ENCODE measurements at regions of chr4 and their contacts with region 1.

Region 1: DNA sequence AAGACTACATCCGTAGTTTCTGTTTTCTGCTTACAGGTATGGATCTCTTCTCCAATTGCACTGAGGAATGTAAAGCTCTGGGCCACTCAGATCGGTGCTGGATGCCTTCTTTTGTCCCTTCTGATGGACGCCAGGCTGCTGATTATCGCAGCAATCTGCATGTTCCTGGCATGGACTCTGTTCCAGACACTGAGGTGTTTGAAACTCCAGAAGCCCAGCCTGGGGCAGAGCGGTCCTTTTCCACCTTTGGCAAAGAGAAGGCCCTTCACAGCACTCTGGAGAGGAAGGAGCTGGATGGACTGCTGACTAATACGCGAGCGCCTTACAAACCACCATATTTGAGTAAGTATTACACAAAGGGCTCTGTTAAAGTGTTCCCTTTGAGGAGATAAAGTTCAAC is 13.8 kb downstream of the PCDH10 start:
- DNase-seq: no peak
- ATAC-seq: no peak
- H3K4me3 Mint-ChIP-seq: no peak overlapping the region
- H3K27ac Mint-ChIP-seq: no peak overlapping the region
- H3K4me1 Mint-ChIP-seq: no peaks in the 10 kb centered on the region
- H3K27me3 Mint-ChIP-seq: no peaks in the 10 kb centered on the region

Region 2: GRCh38 chr4:133137571-133137970 is 25.4 kb before region 1 on chr4:
- CTCF ChIA-PET with region 1: no interaction called
- POLR2A ChIA-PET with region 1: no interaction called
- intact Hi-C with region 1: no loop called
- DNase-seq: no peak
- ATAC-seq: no peak
- H3K4me3 Mint-ChIP-seq: no peak overlapping the region
- H3K27ac Mint-ChIP-seq: no peak overlapping the region
- H3K4me1 Mint-ChIP-seq: no peaks in the 10 kb centered on the region
- H3K27me3 Mint-ChIP-seq: no peaks in the 10 kb centered on the region

Region 3: GRCh38 chr4:133178956-133179355 is 16.0 kb after region 1 on chr4:
- CTCF ChIA-PET with region 1: no interaction called
- POLR2A ChIA-PET with region 1: no interaction called
- intact Hi-C with region 1: no loop called
- DNase-seq: no peak
- ATAC-seq: no peak
- H3K4me3 Mint-ChIP-seq: no peak overlapping the region
- H3K27ac Mint-ChIP-seq: no peak overlapping the region
- H3K4me1 Mint-ChIP-seq: no peaks in the 10 kb centered on the region
- H3K27me3 Mint-ChIP-seq: no peaks in the 10 kb centered on the region

Region 4: DNA sequence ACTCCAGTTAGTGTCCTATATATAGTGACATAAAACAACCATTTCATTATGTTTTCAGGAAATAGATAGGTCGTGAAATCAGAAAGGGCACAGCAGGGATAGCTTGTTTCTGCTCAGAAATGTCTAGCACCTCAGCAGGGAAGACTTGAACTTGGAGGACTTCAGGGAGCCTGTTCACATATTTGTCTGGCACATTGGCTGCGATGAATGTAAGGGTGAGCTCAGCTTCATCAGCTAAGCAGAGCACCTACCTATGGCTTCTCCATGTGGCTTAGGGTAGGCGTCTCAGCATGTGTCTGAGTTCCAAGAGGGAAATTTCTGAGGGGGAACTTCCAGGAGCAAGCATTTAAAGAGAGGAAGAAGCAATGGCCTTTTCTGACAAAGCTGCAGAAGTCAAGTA is 112.3 kb after region 1 on chr4:
- CTCF ChIA-PET with region 1: no interaction called
- POLR2A ChIA-PET with region 1: no interaction called
- intact Hi-C with region 1: no loop called
- DNase-seq: no peak
- ATAC-seq: no peak
- H3K4me3 Mint-ChIP-seq: no peak overlapping the region
- H3K27ac Mint-ChIP-seq: no peak overlapping the region
- H3K4me1 Mint-ChIP-seq: no peaks in the 10 kb centered on the region
- H3K27me3 Mint-ChIP-seq: no peaks in the 10 kb centered on the region

Region 5: DNA sequence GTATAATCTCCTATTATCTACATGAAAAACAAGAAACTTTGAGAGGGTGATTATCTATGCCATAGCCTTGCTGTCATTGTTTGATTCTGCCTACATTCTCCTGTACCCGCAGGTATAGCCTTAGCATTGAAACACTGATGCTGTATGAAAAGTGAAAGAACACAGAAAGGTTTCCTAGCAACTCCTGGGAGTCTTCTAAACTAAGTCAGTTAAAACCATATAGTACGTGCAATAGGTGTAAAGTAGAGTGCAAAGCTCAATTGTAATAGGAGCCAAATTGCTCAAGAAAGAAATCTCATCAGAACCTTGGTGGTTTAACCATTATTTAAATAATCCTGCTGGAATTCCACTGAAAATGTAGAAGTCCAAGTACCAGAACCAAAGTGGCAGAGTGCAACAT is 475.8 kb after region 1 on chr4:
- CTCF ChIA-PET with region 1: no interaction called
- POLR2A ChIA-PET with region 1: no interaction called
- intact Hi-C with region 1: loop called in 1 of 2 experiments (anchors 5 kb)
- DNase-seq: no peak
- ATAC-seq: no peak
- H3K4me3 Mint-ChIP-seq: no peak overlapping the region
- H3K27ac Mint-ChIP-seq: no peak overlapping the region
- H3K4me1 Mint-ChIP-seq: no peaks in the 10 kb centered on the region
- H3K27me3 Mint-ChIP-seq: no peaks in the 10 kb centered on the region

Measured in activated CD4-positive, alpha-beta T cell treated with anti-CD3 and anti-CD28 coated beads for 36 hours (primary cell).